Mammary epithelial cell (primary cell): ENCODE measurements at regions of chr2 and their contacts with region 1.

Region 1: DNA sequence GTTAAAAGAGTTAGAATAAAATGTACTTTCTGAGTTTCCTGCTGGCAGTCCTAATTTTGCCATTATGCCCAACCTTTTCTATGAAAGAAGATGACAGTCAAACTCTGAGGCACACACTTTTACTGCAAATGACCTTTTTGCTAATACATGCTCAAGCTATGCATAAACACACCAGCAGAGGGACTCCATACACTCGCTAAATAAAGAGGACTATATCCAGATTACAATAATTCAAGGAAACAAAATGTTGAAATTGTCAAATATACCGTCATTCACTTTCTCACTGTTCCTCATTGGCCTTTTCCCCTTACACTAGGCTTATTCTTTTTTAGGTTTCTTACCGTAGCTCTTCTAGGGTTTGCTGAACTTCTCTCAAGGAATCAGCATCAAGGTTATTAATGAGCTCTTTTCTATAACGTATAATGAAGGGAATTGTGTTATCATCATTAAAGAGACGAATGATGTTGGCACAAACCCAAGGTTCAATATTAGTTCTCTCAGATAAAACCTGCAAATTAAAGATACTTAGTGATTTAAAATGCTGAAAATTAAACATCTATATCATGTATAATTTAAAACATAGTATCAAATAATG is 25.7 kb downstream of the SRBD1 start:
- DNase-seq: peak; percentile 32
- H3K4me3 ChIP-seq: no peak overlapping the region
- H3K27ac ChIP-seq: no peak overlapping the region
- H3K4me1 ChIP-seq: no peaks in the 10 kb centered on the region
- H3K27me3 ChIP-seq: no peaks in the 10 kb centered on the region
- CTCF ChIP-seq: peak; percentile 81 to 84

Region 2: GRCh38 chr2:45545943-45546342 is 39.4 kb before region 1 on chr2:
- CTCF ChIA-PET with region 1: interaction called, 11 read pairs
- dilution Hi-C with region 1: no loop called
- in situ Hi-C with region 1: no loop called
- intact Hi-C with region 1: no loop called
- DNase-seq: no peak
- H3K4me3 ChIP-seq: no peak overlapping the region
- H3K27ac ChIP-seq: no peak overlapping the region
- H3K4me1 ChIP-seq: no peaks in the 10 kb centered on the region
- H3K27me3 ChIP-seq: no peaks in the 10 kb centered on the region
- CTCF ChIP-seq: no peak

Region 3: GRCh38 chr2:45611020-45611737 is 25.8 kb after region 1 on chr2 and contains the start of gene SRBD1:
- CTCF ChIA-PET with region 1: interaction called, 11 read pairs
- dilution Hi-C with region 1: no loop called
- in situ Hi-C with region 1: no loop called
- intact Hi-C with region 1: loop called (anchors 1 kb)
- DNase-seq: peak; percentile 90
- H3K4me3 ChIP-seq: peak within 1 kb of the TSS; percentile 59 to 99 (median 64)
- H3K27ac ChIP-seq: peak within 1 kb of the TSS; percentile 95
- H3K4me1 ChIP-seq: peaks cover 21% of the 10 kb centered on the region
- H3K27me3 ChIP-seq: no peaks in the 10 kb centered on the region
- CTCF ChIP-seq: no peak
- total RNA-seq, gene SRBD1: 14.3 to 18.8 TPM

Region 4: DNA sequence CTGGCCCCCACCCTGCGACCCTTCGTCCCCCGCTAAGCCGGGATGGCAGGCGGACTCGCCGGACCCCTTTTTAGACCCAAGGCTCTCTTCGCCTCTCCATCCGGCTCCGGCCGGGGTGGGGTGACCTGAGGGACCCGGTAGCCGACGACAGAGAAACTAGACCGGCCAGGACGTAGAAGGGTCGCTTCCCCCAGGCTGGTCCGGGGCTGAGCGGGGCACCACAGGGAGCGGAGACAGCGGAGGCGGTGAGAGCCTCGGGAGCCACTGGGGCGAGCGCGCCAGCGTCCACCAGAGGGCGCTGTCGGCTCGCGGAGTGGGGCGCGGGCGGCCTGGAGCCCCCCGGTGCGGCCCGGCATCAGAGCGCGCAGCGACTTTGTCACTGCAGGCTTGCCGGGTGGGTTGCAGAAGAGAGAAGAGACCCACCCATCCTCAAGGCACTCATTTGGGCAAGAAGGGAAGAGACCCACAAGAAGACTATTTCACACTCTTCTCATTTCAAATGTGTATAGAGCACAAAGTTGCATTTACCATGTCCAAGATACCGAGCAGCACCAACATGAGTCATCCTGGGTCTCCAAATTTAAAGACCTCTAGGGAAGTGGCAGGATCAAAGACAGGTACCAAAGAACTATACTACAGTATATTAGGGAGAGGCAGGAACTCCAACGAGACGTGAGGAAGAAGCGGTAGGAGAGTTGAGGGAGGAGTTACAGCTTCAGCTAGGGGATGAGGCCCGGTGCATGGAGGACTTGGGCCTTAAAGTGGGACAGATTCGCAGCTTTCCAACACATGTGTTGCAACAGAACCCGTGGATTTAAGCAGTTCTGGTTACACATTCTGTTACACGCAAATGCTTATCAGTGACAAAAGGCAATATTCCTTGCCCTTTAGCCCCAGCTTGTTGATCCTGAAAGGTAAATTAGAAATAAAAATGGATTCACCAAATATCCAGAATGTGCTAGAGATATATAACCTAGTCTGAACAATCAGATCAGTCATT is 58.5 kb after region 1 on chr2:
- CTCF ChIA-PET with region 1: no interaction called
- dilution Hi-C with region 1: no loop called
- in situ Hi-C with region 1: no loop called
- intact Hi-C with region 1: loop called (anchors 5 kb)
- DNase-seq: peak; percentile 49
- H3K4me3 ChIP-seq: peak overlapping the region; percentile 48 to 65 (median 51)
- H3K27ac ChIP-seq: no peak overlapping the region
- H3K4me1 ChIP-seq: peaks cover 12% of the 10 kb centered on the region
- H3K27me3 ChIP-seq: peaks cover 2% of the 10 kb centered on the region
- CTCF ChIP-seq: peak; percentile 61 to 83